Activated CD4-positive, alpha-beta memory T cell treated with anti-CD3 and anti-CD28 coated beads for 36 hours (primary cell): ENCODE measurements at regions of chr2 and their contacts with region 1.

Region 1: GRCh38 chr2:72887754-72888437 is 688 bp downstream of the SPR start:
- DNase-seq: peak; percentile 71
- H3K4me3 Mint-ChIP-seq: peak overlapping the region; percentile 69
- H3K27ac Mint-ChIP-seq: no peak overlapping the region
- H3K4me1 Mint-ChIP-seq: peaks cover 11% of the 10 kb centered on the region
- H3K27me3 Mint-ChIP-seq: peaks cover 64% of the 10 kb centered on the region

Region 2: GRCh38 chr2:72750977-72751639 is 136.8 kb before region 1 on chr2:
- CTCF ChIA-PET with region 1: no interaction called
- POLR2A ChIA-PET with region 1: no interaction called
- intact Hi-C with region 1: no loop called
- DNase-seq: no peak
- H3K4me3 Mint-ChIP-seq: no peak overlapping the region
- H3K27ac Mint-ChIP-seq: no peak overlapping the region
- H3K4me1 Mint-ChIP-seq: no peaks in the 10 kb centered on the region
- H3K27me3 Mint-ChIP-seq: no peaks in the 10 kb centered on the region

Region 3: GRCh38 chr2:72862239-72862988 is 25.5 kb before region 1 on chr2:
- CTCF ChIA-PET with region 1: interaction called, 40 read pairs
- POLR2A ChIA-PET with region 1: no interaction called
- intact Hi-C with region 1: loop called (anchors 2 kb)
- DNase-seq: peak; percentile 92
- H3K4me3 Mint-ChIP-seq: peak overlapping the region; percentile 21
- H3K27ac Mint-ChIP-seq: no peak overlapping the region
- H3K4me1 Mint-ChIP-seq: peaks cover 9% of the 10 kb centered on the region
- H3K27me3 Mint-ChIP-seq: peaks cover 50% of the 10 kb centered on the region

Region 4: GRCh38 chr2:72924353-72925240 is 36.7 kb after region 1 on chr2:
- CTCF ChIA-PET with region 1: interaction called, 15 read pairs
- POLR2A ChIA-PET with region 1: no interaction called
- intact Hi-C with region 1: no loop called
- DNase-seq: peak; percentile 20
- H3K4me3 Mint-ChIP-seq: no peak overlapping the region
- H3K27ac Mint-ChIP-seq: no peak overlapping the region
- H3K4me1 Mint-ChIP-seq: peaks cover 6% of the 10 kb centered on the region
- H3K27me3 Mint-ChIP-seq: peaks cover 51% of the 10 kb centered on the region

Region 5: GRCh38 chr2:72973566-72974435 is 85.9 kb after region 1 on chr2:
- CTCF ChIA-PET with region 1: interaction called, 113 read pairs
- POLR2A ChIA-PET with region 1: no interaction called
- intact Hi-C with region 1: loop called (anchors 1 kb)
- DNase-seq: peak; percentile 50
- H3K4me3 Mint-ChIP-seq: no peak overlapping the region
- H3K27ac Mint-ChIP-seq: no peak overlapping the region
- H3K4me1 Mint-ChIP-seq: no peaks in the 10 kb centered on the region
- H3K27me3 Mint-ChIP-seq: no peaks in the 10 kb centered on the region

Region 6: DNA sequence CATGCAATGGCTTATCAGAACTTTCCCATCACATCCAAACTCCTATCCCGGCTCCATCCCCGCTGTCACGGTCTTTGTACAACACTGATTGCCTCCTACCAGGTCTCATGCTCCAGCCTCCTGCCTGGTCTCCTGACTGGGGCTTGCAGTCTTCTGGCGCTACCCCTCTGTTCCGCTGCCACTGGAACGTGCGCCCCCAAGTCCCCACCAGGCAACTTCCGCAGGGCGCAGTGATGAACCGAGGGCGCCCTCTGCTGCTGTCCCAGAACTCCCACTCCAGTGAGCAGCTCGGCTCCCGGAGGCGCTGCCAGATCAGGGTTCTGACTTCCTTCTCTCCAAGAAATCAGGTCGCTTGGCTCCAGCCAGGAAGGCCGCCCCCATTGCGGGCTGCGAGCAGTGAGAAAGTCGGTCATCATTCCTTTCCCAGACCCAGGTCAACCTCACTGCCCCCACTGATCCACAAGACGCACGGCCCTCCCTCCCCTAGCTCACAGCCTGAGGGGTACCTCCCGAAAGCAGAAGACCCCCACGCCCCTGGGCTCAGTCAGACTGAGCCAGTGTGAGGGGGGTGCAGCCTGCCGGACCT is 268.7 kb after region 1 on chr2:
- CTCF ChIA-PET with region 1: interaction called, 14 read pairs
- POLR2A ChIA-PET with region 1: no interaction called
- intact Hi-C with region 1: no loop called
- DNase-seq: peak; percentile 59
- H3K4me3 Mint-ChIP-seq: no peak overlapping the region
- H3K27ac Mint-ChIP-seq: no peak overlapping the region
- H3K4me1 Mint-ChIP-seq: no peaks in the 10 kb centered on the region
- H3K27me3 Mint-ChIP-seq: peaks cover 27% of the 10 kb centered on the region